ENCODE measurements at regions of chr3 and their contacts with region 1.

Region 1: DNA sequence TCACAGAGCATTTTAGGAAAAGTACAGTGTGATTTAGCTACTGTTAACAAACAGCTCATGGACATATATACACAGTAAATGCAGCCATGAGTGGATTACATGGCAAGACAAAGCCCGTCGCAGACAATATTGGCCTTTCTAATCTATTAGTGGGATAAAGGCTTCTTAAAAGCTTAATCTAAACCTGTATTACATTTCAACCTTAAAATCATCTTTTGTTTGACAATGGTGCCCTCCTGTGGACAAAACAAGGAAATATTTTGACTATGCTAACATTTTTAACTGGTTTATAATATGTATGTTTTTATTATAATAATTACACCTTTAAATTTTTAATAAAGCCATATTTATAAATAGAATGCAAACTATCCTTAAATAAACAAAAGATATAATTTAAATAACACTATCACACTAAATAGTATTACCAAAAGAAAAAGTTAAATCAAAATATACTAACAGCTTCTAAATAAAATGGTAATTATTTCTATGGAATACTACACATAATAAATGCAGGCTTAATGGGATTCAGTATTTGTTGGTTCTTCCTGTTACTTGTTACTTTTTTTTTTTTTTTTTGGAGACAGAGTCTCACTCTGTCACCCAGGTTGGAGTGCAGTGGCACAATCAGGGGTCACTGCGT is 38.6 kb downstream of the TAFA4 start:
- DNase-seq: no peak
- H3K4me3 ChIP-seq: no peak overlapping the region
- CTCF ChIP-seq: peak; percentile 22

Region 2: GRCh38 chr3:68666429-68667136 is 227.1 kb before region 1 on chr3:
- CTCF ChIA-PET with region 1: no interaction called
- POLR2A ChIA-PET with region 1: no interaction called
- DNase-seq: no peak
- H3K4me3 ChIP-seq: no peak overlapping the region
- CTCF ChIP-seq: no peak

Region 3: DNA sequence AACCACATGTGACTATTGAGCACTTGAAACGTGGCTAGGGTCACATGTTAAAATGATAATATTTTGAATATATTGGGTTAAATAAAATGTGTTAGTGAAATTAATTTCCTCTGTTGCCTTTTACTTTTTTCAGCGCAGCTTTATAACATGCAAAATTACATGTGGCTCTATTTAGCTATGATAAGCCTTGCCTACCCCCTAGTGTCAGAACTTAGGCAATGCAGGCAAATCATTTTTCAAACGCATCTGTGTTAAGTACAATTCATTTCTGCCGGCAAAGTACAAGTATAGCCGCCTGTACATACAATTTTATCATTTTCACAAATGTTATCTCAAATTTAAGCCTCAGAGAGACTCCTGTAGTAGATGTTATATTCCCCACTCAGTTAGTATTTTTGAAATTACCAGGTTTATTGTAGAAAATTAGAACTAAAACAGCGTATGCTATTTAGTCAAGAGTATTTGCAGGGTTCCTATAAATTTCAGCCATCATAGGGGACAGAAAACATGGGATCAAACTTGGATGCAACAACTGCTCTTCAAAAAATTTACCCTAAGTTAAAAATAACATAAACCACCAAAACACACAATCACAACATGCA is 17.5 kb before region 1 on chr3:
- CTCF ChIA-PET with region 1: interaction called, 11 read pairs
- POLR2A ChIA-PET with region 1: no interaction called
- DNase-seq: peak; percentile 26
- H3K4me3 ChIP-seq: no peak overlapping the region
- CTCF ChIP-seq: peak; percentile 75

Region 4: GRCh38 chr3:68919000-68919399 is 25.3 kb after region 1 on chr3:
- CTCF ChIA-PET with region 1: interaction called, 14 read pairs
- POLR2A ChIA-PET with region 1: no interaction called
- DNase-seq: no peak
- H3K4me3 ChIP-seq: no peak overlapping the region
- CTCF ChIP-seq: no peak

Region 5: GRCh38 chr3:69370156-69370883 is 476.6 kb after region 1 on chr3:
- CTCF ChIA-PET with region 1: no interaction called
- POLR2A ChIA-PET with region 1: no interaction called
- DNase-seq: no peak
- H3K4me3 ChIP-seq: no peak overlapping the region; the same call in 1 of the 2 replicates
- CTCF ChIP-seq: no peak

Measured in AG04449 (cell line).